ENCODE measurements at regions of chr14 and their contacts with region 1.

Region 1: DNA sequence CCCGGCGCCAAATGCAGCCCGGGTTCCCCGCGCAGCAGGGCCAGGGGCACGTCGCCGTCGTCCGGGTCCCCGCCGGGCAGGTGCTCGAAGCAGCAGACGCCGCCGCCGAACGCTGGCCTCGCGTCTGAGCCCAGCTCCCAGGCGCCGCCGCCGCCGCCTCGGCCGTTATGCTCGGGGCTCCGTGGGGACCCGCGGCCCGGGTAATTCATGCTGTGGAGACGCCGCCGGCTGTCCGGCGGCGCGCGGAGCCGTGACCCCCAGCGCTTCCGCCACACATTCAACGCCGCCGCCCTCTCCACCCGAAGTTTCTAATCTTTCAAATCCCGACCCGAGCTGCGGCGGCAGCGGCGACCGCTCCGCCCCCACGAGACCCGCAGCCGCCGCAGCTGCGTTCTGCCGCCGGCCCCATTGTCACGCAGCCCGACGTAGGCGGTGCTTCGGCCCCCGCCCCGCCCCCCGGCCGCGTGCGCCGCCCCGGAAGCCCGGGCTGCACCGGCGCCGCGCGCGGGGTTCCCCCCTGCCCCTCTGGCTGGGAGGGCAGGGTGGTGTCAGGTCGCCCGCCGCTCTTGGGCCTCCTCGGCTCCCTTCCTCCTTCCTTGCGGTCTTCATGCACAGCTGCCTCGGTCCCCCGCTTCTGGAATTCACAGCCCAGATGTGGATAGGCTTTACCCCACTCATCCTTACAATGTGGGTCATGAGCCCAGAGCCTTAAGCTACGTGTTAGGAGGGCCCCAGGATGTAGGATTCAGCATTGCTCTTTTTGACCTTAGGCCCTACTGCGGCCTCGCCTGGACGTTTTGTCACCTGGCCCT is at the start of gene DDHD1:
- DNase-seq: peak; percentile 87
- total RNA-seq, gene DDHD1: 8.3 TPM

Region 2: GRCh38 chr14:53044486-53044885 is 108.6 kb before region 1 on chr14:
- intact Hi-C with region 1: loop called (anchors 5 kb)
- DNase-seq: no peak

Region 3: GRCh38 chr14:53217295-53217994 is 64.3 kb after region 1 on chr14:
- intact Hi-C with region 1: loop called (anchors 5 kb)
- DNase-seq: peak; percentile 84

Region 4: DNA sequence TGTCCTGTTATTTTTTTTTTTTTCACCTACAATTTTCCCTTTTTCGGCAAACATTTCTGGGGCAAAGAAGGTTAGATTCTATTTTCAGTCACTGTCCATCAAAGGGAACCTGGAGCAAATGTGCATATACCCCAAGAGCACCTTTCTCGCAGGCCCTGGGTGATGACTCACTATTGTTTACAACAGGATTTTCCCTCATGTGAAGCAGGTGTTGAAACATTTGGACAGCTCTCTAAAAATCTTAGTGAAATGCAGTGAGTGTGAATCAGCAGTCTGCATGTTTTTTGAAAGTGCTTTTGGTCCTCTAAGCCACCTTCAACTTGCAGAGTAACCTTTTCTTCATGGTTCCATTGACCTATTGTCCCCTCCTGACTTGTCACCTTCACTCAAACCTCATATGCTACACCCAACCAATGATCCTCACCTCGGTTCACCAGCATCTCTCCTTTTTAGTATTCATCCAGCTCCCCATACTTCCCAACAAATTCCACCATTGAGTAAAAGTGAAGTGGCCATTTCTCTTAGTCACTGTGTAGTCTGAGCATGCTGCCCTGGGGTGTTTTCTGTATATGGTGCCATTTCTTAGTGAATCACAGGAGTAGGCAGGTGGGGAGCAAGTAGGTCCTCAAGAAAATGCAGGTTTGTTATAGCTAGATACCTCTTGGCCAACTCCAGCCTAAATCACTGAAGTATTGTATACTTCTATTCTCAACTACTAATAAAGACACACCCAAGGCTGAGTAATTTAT is 543.3 kb after region 1 on chr14:
- intact Hi-C with region 1: no loop called
- DNase-seq: no peak